Calu3 (cell line): ENCODE measurements at regions of chr4 and their contacts with region 1.

Region 1: DNA sequence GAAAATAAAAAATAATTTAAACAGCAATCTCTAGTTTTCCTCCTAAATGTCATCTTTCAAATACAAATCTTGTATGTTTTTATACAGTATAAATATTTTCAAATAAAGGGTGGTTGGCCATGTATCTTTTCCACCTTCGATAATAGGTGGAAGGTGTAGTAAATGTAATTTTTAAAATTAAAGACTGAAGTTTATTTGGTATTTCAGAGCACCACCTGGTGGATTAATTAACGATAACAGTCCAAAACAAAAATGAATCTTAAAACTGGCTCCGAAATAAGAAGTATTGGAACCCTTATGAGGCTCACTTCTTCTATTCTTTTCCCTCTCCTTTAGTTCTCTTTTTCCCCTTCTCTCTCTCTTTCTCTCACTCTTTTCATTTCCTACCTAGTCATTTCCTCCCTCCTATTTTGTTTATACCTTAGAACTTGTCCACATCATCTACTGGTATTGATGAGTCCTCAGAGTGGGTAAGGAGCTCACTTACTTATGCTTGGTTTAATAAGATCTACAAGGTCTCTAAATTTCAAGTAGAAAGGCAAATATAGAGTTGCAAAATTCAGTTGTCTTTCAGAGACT is 82.9 kb upstream of the EXOC1L start:
- DNase-seq: no peak
- H3K4me3 Mint-ChIP-seq: no peak overlapping the region
- H3K27ac Mint-ChIP-seq: no peak overlapping the region
- H3K4me1 Mint-ChIP-seq: peaks cover 21% of the 10 kb centered on the region
- H3K27me3 Mint-ChIP-seq: no peaks in the 10 kb centered on the region
- CTCF ChIP-seq: peak; percentile 27

Region 2: GRCh38 chr4:54971474-54971950 is 765.2 kb before region 1 on chr4:
- CTCF ChIA-PET with region 1: no interaction called
- intact Hi-C with region 1: loop called (anchors 10 kb)
- DNase-seq: peak; percentile 15
- H3K4me3 Mint-ChIP-seq: no peak overlapping the region
- H3K27ac Mint-ChIP-seq: no peak overlapping the region
- H3K4me1 Mint-ChIP-seq: peaks cover 8% of the 10 kb centered on the region
- H3K27me3 Mint-ChIP-seq: no peaks in the 10 kb centered on the region
- CTCF ChIP-seq: peak; percentile 69

Region 3: DNA sequence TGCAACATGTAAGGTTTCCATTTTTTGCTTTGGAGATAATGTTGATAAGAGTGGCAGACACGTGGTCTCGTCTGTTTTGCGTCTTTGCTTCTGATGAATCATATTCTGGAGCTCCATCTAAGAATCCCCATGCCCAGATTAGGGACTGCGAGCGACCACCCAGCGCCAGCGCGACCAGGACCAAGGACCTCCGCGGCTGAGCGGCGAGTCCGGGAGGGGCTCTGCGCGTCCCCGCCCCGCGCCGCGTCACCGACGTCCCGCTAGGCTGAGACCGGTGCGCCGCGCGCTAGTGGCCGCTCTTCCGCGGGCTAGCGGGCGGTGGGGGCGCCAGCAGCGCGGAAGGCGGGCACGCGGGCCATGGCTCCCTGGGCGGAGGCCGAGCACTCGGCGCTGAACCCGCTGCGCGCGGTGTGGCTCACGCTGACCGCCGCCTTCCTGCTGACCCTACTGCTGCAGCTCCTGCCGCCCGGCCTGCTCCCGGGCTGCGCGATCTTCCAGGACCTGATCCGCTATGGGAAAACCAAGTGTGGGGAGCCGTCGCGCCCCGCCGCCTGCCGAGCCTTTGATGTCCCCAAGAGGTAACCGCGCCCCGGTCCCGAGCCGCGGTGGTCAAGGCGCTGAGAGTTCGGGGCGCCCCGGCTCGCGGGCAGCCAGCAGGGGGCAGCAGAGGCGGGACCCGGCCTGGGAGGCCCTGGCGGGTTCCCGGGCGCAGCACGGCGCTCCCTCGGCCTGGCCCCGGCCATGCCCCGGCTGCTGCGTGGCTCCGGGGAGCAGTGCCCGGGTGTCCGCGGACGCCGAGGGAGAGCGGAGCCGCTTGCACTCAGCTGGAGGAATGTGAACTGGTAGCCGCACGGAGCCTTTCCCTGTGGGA is 390.5 kb before region 1 on chr4 and contains the start of gene SRD5A3:
- CTCF ChIA-PET with region 1: no interaction called
- intact Hi-C with region 1: loop called (anchors 10 kb)
- DNase-seq: peak; percentile 94
- H3K4me3 Mint-ChIP-seq: peak within 1 kb of the TSS; percentile 85
- H3K27ac Mint-ChIP-seq: peak within 1 kb of the TSS; percentile 56
- H3K4me1 Mint-ChIP-seq: peaks cover 15% of the 10 kb centered on the region
- H3K27me3 Mint-ChIP-seq: no peaks in the 10 kb centered on the region
- CTCF ChIP-seq: peak; percentile 91
- total RNA-seq, gene SRD5A3: 35.9 and 39.6 TPM in 2 replicates

Region 4: DNA sequence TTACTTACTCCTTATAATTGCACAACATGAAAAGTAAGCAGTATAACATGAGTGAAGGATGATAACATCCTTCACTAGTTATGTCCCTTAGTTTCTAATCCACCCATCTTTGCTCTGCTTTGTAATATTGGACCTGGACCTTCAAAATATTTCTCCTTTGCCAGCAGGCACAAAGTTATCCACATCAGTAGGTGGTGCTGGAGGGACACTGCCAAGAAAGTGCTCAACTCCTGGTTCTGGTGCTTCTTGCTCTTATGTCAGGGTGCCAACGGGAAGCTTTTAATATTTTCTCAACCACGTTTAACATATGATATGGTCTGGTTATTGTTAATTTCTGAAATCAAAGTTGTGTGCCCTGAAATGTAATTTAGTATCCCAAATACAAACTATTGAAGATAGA is 291.9 kb before region 1 on chr4:
- CTCF ChIA-PET with region 1: no interaction called
- intact Hi-C with region 1: loop called (anchors 2 kb)
- DNase-seq: no peak
- H3K4me3 Mint-ChIP-seq: no peak overlapping the region
- H3K27ac Mint-ChIP-seq: no peak overlapping the region
- H3K4me1 Mint-ChIP-seq: no peaks in the 10 kb centered on the region
- H3K27me3 Mint-ChIP-seq: no peaks in the 10 kb centered on the region
- CTCF ChIP-seq: no peak

Region 5: GRCh38 chr4:55546756-55547465 is 189.8 kb before region 1 on chr4 and contains the start of gene CLOCK:
- CTCF ChIA-PET with region 1: interaction called, 3 read pairs
- intact Hi-C with region 1: loop called (anchors 5 kb)
- DNase-seq: peak; percentile 79
- H3K4me3 Mint-ChIP-seq: peak within 1 kb of the TSS; percentile 79
- H3K27ac Mint-ChIP-seq: peak within 1 kb of the TSS; percentile 52
- H3K4me1 Mint-ChIP-seq: peaks cover 38% of the 10 kb centered on the region
- H3K27me3 Mint-ChIP-seq: no peaks in the 10 kb centered on the region
- CTCF ChIP-seq: peak; percentile 20
- total RNA-seq, gene CLOCK: 13.3 and 16.2 TPM in 2 replicates

Region 6: GRCh38 chr4:55634417-55635128 is 102.1 kb before region 1 on chr4:
- CTCF ChIA-PET with region 1: no interaction called
- intact Hi-C with region 1: loop called (anchors 5 kb)
- DNase-seq: no peak
- H3K4me3 Mint-ChIP-seq: peak overlapping the region; percentile 87
- H3K27ac Mint-ChIP-seq: no peak overlapping the region
- H3K4me1 Mint-ChIP-seq: peaks cover 19% of the 10 kb centered on the region
- H3K27me3 Mint-ChIP-seq: peaks cover 24% of the 10 kb centered on the region
- CTCF ChIP-seq: no peak

Region 7: GRCh38 chr4:55866973-55867574 is 130.4 kb after region 1 on chr4:
- CTCF ChIA-PET with region 1: no interaction called
- intact Hi-C with region 1: loop called (anchors 2 kb)
- DNase-seq: peak; percentile 9
- H3K4me3 Mint-ChIP-seq: no peak overlapping the region
- H3K27ac Mint-ChIP-seq: no peak overlapping the region
- H3K4me1 Mint-ChIP-seq: peaks cover 10% of the 10 kb centered on the region
- H3K27me3 Mint-ChIP-seq: no peaks in the 10 kb centered on the region
- CTCF ChIP-seq: peak; percentile 31